Dorsolateral prefrontal cortex (tissue), 120 donors: ENCODE measurements at regions of chr12 and their contacts with region 1.

Region 1: GRCh38 chr12:77685112-77685511 is 145.6 kb upstream of the NAV3 start:
- DNase-seq: peak in 8 of 10 donors; percentile 48 to 77 (median 60)
- H3K4me3 ChIP-seq: peak overlapping the region in 31 of 59 donors; percentile 1 to 56 (median 30)
- H3K27ac ChIP-seq: no peak overlapping the region
- H3K27me3 ChIP-seq: no peaks in the 10 kb centered on the region
- CTCF ChIP-seq: peak in 55 of 56 donors; percentile 38 to 74 (median 61)

Region 2: DNA sequence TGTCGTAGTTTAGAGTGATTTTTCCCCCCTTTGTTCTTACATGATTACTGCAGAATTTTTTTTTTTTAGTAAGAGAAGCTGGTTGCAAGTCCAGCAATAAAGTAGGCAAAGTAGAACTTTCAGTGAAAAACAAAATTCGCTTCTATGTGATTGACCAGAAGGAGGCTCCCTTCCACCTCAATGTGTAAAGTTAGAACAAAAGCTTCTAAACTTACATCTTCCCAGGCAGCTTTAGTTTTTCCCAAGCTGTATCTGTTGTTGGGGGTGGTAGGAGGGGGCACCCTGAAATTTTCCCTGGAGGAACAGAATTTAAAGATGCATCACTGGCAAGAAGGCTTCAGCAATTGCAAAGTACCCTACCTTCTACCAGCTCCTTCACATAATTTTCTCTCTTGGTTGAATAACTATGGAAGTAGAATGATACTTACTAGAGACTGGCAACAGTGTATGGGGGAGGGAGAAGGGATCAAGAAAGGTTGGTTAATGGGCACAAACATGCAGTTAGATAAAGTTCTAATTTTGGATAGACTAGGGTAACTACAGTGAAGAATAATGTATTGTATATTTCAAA is 532.4 kb before region 1 on chr12:
- intact Hi-C with region 1: loop called in 1 of 2 experiments (anchors 10 kb)
- DNase-seq: no peak
- H3K4me3 ChIP-seq: no peak overlapping the region
- H3K27ac ChIP-seq: no peak overlapping the region
- H3K27me3 ChIP-seq: no peaks in the 10 kb centered on the region
- CTCF ChIP-seq: peak in 53 of 56 donors; percentile 23 to 70 (median 50)